ENCODE measurements at regions of chr15 and their contacts with region 1.

Region 1: GRCh38 chr15:41904541-41905005 is 10.7 kb upstream of the SPTBN5 start:
- DNase-seq: peak in 1 of 2 donors; percentile 81
- ATAC-seq: peak; percentile 70
- H3K4me3 ChIP-seq: no peak overlapping the region
- H3K27ac ChIP-seq: no peak overlapping the region
- H3K4me1 ChIP-seq: no peaks in the 10 kb centered on the region
- H3K27me3 ChIP-seq: no peaks in the 10 kb centered on the region

Region 2: DNA sequence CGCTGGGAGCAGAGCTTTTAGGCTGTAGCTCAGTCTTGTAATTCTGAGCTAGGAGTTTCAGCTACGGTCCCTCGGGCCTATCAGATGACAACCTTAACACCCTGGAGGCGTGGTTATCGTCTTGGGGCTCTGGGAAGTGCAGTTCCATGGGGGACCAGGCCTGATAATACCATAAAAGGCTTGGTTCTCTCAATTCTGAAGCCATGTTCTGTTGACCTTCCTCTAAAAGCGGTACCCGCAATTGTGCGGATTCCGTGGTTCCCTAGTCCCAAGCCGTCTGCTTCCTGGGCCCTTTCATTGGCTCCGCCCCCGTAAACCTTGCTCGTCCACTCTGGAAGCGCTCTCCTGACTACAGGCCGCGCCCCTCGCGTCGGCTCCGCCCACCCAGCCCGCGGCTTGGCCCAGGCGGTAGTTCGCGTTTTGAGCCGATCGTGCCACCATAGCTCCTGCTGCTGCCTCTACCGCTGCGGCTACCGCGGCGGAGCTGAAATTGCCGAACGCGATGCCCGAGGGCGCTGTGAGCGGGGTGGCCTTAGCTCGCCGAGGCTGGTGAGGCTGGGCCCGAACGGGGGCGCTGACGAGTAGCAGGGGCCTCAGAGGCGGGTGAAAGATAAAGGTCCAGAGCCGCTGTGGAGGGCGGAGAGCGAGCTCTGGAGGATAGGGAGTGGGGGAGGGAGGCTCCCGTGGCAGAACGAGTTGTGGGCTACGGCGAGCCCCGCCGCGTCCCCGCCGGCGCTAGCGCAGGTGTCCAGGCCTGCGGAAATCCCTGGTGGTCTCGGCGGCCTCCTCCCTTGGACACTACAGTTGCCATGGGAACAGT is 130.3 kb before region 1 on chr15 and contains the start of gene MAPKBP1:
- intact Hi-C with region 1: loop called in 1 of 2 experiments (anchors 5 kb)
- DNase-seq: peak; percentile 99
- ATAC-seq: peak; percentile 99
- H3K4me3 ChIP-seq: peak within 1 kb of the TSS; percentile 19 to 66
- H3K27ac ChIP-seq: peak within 1 kb of the TSS; percentile 72 to 84
- H3K4me1 ChIP-seq: peaks cover 4 to 6% of the 10 kb centered on the region in 2 donors
- H3K27me3 ChIP-seq: no peaks in the 10 kb centered on the region
- total RNA-seq, gene MAPKBP1: 38.2 to 44.1 TPM

Region 3: DNA sequence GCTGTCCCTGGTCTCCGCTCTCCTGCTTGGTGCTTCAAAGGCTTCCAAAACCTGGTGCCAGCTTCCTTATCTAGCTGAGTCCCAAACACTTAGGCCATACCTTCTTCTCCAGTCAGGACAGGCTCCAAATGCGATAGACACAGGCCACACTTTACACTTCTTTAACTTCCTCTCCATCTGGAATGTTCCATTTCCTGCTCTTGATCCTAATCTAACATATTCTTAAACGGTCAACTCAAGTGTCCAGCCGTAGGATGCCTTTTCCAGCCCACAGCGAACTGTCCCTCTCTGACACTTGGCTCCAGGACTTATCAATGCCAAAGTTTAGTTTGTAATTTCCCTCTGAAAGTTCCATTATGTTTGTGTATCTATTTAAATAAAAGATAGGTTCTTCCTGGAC is 271.1 kb after region 1 on chr15:
- intact Hi-C with region 1: no loop called
- DNase-seq: no peak
- ATAC-seq: no peak
- H3K4me3 ChIP-seq: no peak overlapping the region
- H3K27ac ChIP-seq: no peak overlapping the region
- H3K4me1 ChIP-seq: no peaks in the 10 kb centered on the region
- H3K27me3 ChIP-seq: no peaks in the 10 kb centered on the region

Measured in aorta (tissue), 5 donors.